ENCODE measurements at regions of chr10 and their contacts with region 1.

Region 1: DNA sequence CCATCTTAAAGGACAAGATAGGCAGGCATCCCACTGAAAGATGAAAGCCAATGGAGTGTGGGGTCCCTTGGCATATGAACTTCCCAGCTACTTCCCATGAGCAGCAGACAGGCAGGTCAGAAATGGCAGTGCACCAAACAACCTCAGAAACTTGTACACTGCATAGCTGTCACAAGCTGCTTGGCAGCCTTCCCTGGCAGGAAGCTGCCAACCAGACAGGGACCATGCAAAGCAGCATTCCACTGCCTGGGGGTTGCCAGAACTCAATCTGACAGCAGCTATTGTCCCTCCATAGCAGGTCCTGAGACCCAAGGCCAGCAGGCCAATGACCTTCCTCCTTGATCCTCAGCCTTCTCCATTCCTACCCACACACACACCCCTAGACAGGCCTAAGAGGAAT is 139.5 kb downstream of the PLCE1 start:
- DNase-seq: peak; percentile 80
- ATAC-seq: peak; percentile 95

Region 2: DNA sequence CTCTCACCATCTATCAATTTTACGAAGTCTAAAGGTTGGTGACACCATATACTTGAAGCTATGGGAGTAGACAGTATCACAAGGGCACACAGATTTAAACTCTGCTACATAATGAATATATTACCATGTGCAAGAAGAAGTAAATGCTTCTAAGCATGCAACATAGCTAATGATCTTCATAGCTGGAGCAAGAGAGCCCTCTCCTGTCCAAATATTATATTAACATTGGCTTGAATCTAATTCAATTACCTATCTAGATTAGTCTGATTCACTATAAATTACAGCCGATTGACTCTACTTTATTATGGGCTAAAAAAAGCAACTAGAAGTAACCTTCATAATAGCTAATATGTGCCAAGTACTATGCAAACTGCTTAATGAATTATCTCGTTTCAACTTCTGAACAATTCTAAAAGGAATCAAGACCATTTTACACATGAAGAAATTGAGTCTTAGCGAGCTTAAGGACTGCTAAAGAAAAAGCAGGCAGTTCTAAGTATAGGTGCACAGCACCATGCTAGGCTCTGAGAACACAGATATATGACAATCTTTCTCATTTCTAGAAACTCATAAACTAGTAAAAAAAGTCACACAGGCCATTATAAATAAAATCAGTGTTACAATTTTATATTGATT is 452.7 kb before region 1 on chr10:
- intact Hi-C with region 1: no loop called
- DNase-seq: no peak
- ATAC-seq: no peak

Region 3: GRCh38 chr10:94083662-94084265 is 49.5 kb before region 1 on chr10:
- intact Hi-C with region 1: loop called (anchors 5 kb)
- DNase-seq: no peak
- ATAC-seq: no peak

Region 4: GRCh38 chr10:94205396-94205831 is 72.2 kb after region 1 on chr10:
- intact Hi-C with region 1: no loop called
- DNase-seq: no peak
- ATAC-seq: no peak

Region 5: GRCh38 chr10:94274142-94274787 is 141.0 kb after region 1 on chr10:
- intact Hi-C with region 1: loop called (anchors 5 kb)
- DNase-seq: peak; percentile 70
- ATAC-seq: peak; percentile 96

Measured in Right ventricle myocardium inferior (tissue), 1 donor.